ENCODE measurements at regions of chr1 and their contacts with region 1.

Region 1: GRCh38 chr1:36187800-36188593 is 32.0 kb downstream of the MAP7D1 start:
- DNase-seq: peak; percentile 50
- H3K4me3 ChIP-seq: no peak overlapping the region
- H3K27me3 ChIP-seq: no peaks in the 10 kb centered on the region
- CTCF ChIP-seq: peak; percentile 87

Region 2: DNA sequence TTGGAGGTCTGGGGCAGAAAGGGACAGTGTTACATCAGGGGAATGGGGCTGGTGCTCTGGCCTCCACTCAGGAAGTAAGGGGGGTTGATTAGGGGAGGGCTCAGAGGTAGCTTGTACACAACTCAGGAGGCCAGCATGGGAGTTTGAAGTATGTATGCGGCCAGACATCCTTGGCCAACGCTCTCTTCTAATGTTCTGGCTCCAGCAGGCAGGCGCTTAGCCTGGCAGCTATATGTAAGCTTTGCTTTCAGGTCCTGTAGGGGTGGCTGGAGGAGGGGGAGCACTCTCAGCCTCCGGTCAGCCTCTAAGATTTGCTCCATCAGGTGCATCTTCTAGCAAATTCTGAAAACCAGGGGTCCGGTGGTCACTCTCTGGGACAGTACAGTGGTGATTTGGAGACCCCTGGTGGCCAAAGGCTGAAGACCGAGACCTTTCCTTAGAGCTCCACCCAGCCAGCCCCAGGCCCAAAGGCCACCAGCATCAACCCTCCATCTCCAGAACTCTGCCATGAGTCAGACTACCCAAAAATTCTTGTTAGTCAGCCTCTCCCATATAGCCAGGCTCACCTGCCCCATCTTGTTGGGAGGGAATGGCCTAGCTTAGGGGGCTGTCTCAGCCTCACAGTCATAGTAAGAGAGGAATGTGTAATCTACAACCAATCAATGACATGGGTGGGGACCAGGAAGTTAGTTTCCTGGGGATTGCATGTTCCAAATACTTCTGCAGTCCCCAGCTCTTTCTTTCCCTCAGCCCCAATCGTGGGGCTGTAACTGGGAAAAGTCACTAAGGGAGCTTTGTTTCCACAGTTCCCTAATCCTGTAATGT is 53.3 kb before region 1 on chr1:
- CTCF ChIA-PET with region 1: interaction called, 53 read pairs
- POLR2A ChIA-PET with region 1: no interaction called
- DNase-seq: no peak
- H3K4me3 ChIP-seq: no peak overlapping the region
- H3K27me3 ChIP-seq: no peaks in the 10 kb centered on the region
- CTCF ChIP-seq: peak; percentile 79

Region 3: DNA sequence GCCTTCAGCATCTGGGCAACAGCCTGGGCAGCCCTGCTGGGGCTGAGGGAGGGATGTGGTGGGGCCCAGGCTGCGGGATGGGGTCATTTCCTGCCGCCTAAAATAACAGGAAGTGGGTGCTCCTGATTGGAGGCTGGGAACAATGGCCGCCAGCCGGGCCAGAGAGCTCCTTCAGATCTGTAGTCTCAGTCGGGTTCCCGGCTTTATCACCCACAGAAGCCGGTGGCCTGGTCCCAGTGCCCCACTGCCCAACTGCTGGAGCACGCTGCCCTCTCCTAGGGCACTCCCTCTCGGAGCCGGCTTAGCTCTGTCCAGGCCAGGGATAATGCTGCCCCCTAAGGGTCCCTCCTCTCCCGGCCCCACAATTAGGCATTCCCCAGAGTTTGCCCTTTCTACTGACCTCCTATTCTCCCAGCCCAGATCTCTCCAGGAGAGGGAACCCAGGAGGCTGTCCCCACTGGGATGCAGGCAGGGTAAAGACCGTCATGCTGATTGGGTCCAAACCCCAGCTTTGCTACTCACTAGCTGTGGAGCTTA is 27.0 kb before region 1 on chr1:
- CTCF ChIA-PET with region 1: interaction called, 31 read pairs
- POLR2A ChIA-PET with region 1: no interaction called
- DNase-seq: no peak
- H3K4me3 ChIP-seq: peak overlapping the region; percentile 43
- H3K27me3 ChIP-seq: no peaks in the 10 kb centered on the region
- CTCF ChIP-seq: peak; percentile 53

Region 4: GRCh38 chr1:36285448-36286101 is 97.6 kb after region 1 on chr1:
- CTCF ChIA-PET with region 1: interaction called, 24 read pairs
- POLR2A ChIA-PET with region 1: no interaction called
- DNase-seq: no peak
- H3K4me3 ChIP-seq: no peak overlapping the region
- H3K27me3 ChIP-seq: no peaks in the 10 kb centered on the region
- CTCF ChIP-seq: peak; percentile 68

Region 5: DNA sequence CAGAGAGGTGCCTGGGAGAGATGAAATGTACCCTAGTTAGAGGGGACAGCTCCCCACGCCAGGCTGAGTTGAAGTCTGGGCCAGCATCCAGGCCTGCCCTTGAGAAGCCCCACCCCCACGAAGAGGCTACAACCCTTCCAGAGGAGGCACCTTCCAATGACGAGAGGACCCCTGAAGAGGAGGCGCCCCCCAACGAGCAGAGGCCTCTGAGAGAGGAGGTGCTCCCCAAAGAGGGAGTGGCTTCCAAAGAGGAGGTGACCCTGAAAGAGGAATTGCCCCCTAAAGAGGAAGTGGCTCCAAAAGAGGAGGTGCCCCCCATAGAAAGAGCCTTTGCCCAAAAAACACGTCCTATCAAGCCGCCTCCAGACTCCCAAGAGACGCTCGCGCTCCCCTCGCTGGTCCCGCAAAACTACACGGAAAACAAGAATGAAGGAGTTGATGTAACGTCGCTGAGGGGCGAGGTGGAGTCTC is 132.3 kb after region 1 on chr1:
- CTCF ChIA-PET with region 1: no interaction called
- POLR2A ChIA-PET with region 1: no interaction called
- DNase-seq: no peak
- H3K4me3 ChIP-seq: peak overlapping the region; percentile 81
- H3K27me3 ChIP-seq: no peaks in the 10 kb centered on the region
- CTCF ChIP-seq: no peak